Dorsolateral prefrontal cortex (tissue), 120 donors: ENCODE measurements at regions of chr22 and their contacts with region 1.

Region 1: DNA sequence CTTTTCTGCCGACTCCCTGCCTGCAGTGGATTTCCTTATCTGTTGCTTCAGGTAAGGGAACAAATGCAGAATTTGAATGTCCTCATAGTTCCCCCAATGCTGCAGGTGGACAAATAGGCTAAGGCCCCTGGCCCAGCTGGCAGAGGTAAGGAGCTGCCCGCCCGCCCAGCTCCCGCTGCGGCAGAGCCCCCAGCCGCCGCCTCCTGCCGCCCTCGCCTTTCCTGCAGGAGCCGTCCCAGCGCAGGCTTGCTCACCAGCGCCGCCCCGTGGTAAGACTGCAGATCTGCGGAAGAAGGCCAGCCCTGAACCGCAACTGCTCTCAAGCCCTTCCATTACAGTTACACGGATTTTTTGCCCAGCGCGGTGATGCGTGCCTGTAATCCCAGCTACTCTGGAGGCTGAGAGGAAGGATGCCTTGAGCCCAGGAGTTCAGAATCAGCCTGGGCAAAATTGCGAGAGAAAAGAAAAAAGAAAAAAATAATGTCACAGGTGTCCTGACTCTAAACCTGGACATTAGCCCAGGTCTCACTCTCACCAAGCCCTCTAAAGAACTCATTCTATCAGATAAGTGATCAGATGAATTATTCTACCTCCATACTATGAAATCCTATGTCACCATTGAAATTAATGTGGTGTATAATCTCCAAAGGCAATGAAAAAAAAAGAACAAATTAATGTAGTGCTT is 51.2 kb upstream of the EMID1 start:
- DNase-seq: peak; percentile 60 to 87 (median 69)
- H3K4me3 ChIP-seq: peak overlapping the region in 51 of 59 donors; percentile 2 to 61 (median 37)
- H3K27ac ChIP-seq: peak overlapping the region in 20 of 59 donors; percentile 3 to 83 (median 63)
- H3K27me3 ChIP-seq: no peaks in the 10 kb centered on the region
- CTCF ChIP-seq: peak; percentile 77 to 99 (median 96)

Region 2: DNA sequence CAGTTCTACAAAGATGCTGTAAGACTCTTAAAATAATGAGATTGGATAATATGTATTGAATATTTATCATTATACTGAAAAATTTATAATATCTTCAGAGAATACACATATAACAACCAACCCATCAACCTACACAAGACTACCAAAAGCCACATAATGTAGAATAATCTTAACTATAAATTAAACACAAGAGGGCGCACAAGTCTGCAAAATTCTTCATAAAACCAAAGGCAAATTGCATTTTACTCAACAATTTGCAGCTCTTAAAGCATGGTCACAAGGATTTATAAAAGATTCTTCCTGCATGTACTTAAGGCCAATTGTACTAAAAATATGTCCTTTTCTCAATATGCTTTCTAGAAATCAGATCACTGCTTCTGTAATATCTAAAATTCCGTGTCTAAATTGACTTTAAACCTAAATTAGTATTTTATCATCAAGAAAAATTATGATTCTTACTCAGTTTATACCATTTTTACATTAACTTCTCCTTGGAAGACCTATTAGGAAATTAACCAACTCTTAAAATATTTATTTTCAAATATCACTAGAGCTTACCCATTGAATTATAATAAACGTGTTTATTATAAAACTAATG is 553.9 kb before region 1 on chr22:
- intact Hi-C with region 1: loop called in 1 of 2 experiments (anchors 10 kb)
- DNase-seq: no peak
- H3K4me3 ChIP-seq: no peak overlapping the region
- H3K27ac ChIP-seq: no peak overlapping the region
- H3K27me3 ChIP-seq: no peaks in the 10 kb centered on the region
- CTCF ChIP-seq: peak; percentile 59 to 96 (median 74)

Region 3: DNA sequence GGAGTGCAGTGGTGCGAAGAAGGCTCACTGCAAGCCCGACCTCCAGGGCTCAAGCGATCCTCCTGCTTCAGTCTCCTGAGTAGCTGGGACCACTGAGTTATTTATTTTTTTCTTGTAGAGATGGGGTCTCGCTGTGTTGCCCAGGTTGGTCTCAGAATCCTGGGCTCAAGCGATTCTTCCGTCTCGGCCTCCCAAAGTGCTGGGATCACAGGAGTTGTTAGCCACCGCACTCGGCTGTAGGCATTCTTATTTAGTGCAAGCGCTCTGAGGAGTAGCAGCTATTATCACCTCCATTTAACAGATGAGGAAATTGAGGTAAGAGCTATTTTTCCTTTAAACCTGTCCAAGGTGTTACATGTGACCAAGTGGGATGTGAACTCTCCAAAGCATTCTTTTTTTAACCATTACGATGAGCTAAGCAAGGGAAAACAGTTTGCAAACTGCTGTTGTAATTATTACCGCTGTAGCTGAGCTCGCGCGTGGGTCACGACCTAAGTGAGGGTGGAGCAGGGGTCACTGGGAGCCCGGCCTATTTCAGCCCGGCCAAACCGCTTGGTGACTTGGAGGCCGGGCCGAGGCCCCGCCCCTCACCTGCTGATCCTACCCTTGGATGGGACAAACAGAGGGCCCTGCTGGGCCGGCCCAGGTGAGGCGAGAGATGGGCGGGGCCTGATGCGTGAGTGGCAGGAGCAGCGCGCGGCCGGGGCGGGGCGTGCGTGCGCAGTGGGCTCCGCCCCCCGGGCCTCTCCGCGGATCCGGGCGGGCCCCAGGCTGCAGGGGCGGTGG is 82.1 kb before region 1 on chr22:
- intact Hi-C with region 1: loop called in 1 of 2 experiments (anchors 5 kb)
- DNase-seq: peak; percentile 60 to 89 (median 74)
- H3K4me3 ChIP-seq: peak overlapping the region; percentile 32 to 83 (median 68)
- H3K27ac ChIP-seq: peak overlapping the region in 1 of 59 donors; percentile 18
- H3K27me3 ChIP-seq: no peaks in the 10 kb centered on the region
- CTCF ChIP-seq: no peak

Region 4: DNA sequence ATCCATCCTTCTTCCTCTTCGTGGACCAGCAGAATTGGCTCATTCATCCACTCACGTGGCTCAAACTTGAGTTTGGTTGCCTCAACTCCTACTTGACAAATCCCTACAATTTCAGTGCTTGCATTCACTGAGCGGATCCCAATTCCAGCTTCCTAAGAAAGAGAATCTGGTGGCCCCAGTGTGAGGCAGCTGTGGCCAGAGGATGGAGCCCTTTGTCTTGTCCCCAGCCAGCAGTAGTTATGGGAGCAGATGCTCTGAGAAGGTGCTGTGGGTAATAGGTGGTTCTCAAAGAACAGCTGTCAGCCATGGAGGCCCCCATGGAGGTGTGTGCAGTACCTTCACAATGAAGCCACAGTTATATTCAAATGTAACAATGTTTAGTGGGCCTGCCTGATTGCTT is 42.4 kb before region 1 on chr22:
- intact Hi-C with region 1: loop called (anchors 5 kb)
- DNase-seq: peak in 2 of 10 donors; percentile 39 to 56
- H3K4me3 ChIP-seq: no peak overlapping the region
- H3K27ac ChIP-seq: peak overlapping the region in 11 of 59 donors; percentile 9 to 77 (median 61)
- H3K27me3 ChIP-seq: no peaks in the 10 kb centered on the region
- CTCF ChIP-seq: peak in 26 of 56 donors; percentile 11 to 63 (median 31)